CD14-positive monocyte (primary cell): ENCODE measurements at regions of chr15 and their contacts with region 1.

Region 1: GRCh38 chr15:38690689-38691332 is 126.2 kb upstream of the RASGRP1 start:
- DNase-seq: peak; percentile 25 to 56 (median 51)
- H3K4me3 ChIP-seq: no peak overlapping the region
- H3K4me3 Mint-ChIP-seq: no peak overlapping the region
- H3K27ac ChIP-seq: no peak overlapping the region
- H3K27ac Mint-ChIP-seq: no peak overlapping the region
- H3K4me1 ChIP-seq: no peaks in the 10 kb centered on the region
- H3K4me1 Mint-ChIP-seq: peaks cover 4% of the 10 kb centered on the region
- H3K27me3 ChIP-seq: no peaks in the 10 kb centered on the region
- H3K27me3 Mint-ChIP-seq: peaks cover 0 to 2% (median 0%) of the 10 kb centered on the region in 3 donors
- CTCF ChIP-seq: peak; percentile 87

Region 2: GRCh38 chr15:38440353-38441129 is 250.3 kb before region 1 on chr15:
- intact Hi-C with region 1: loop called in 1 of 2 experiments (anchors 5 kb)
- DNase-seq: peak; percentile 46 to 67 (median 52)
- H3K4me3 ChIP-seq: no peak overlapping the region
- H3K4me3 Mint-ChIP-seq: no peak overlapping the region
- H3K27ac ChIP-seq: no peak overlapping the region
- H3K27ac Mint-ChIP-seq: peak overlapping the region in 1 of 7 donors; percentile 58
- H3K4me1 ChIP-seq: peaks cover 18 to 24% of the 10 kb centered on the region in 2 donors
- H3K4me1 Mint-ChIP-seq: peaks cover 27% of the 10 kb centered on the region
- H3K27me3 ChIP-seq: no peaks in the 10 kb centered on the region
- H3K27me3 Mint-ChIP-seq: peaks cover 0 to 8% (median 4%) of the 10 kb centered on the region in 3 donors
- CTCF ChIP-seq: peak; percentile 97

Region 3: GRCh38 chr15:38474155-38474757 is 216.6 kb before region 1 on chr15:
- intact Hi-C with region 1: loop called (anchors 5 to 10 kb)
- DNase-seq: peak; percentile 11 to 38 (median 30)
- H3K4me3 ChIP-seq: no peak overlapping the region
- H3K4me3 Mint-ChIP-seq: no peak overlapping the region
- H3K27ac ChIP-seq: no peak overlapping the region
- H3K27ac Mint-ChIP-seq: no peak overlapping the region
- H3K4me1 ChIP-seq: no peaks in the 10 kb centered on the region
- H3K4me1 Mint-ChIP-seq: no peaks in the 10 kb centered on the region
- H3K27me3 ChIP-seq: no peaks in the 10 kb centered on the region
- H3K27me3 Mint-ChIP-seq: no peaks in the 10 kb centered on the region
- CTCF ChIP-seq: peak; percentile 77

Region 4: DNA sequence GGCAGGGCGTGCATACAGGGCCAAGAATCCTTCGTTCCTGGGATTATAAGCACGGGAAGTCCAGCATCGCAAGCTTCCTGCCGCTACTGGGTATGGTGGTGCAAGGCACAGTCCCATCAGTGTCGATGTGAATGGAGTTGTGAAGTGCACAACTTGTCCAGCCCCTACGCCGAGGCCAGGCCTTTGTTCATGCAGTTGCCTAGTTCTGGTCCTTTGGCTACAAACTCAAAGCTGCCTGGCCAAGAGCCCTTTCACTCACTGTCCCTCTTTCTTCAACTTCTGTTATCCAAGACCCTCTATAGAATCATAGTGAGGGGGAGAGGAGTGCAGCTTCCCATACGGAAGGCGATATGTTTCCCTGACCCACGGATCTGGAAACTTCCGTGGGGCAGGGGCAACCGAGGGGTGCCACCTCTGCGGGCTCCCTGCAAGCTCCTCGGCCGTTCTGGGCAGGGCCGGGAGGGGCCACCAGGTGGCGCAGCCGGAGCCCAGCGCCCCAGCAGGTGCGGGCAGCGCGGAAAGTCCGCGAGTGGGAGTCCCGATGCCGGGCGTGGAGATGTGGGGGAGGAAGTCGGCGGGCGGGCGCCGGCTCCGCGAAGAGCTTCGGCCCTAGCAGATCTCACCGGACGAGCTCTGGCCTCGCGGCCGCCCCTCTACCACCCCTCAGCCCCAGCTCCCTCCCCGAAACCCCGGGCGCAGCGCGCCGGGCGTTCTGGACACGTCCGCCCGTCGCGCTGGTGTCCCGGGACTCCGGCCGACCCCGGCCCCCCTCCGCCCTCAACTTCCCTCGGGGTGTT is 126.9 kb before region 1 on chr15:
- intact Hi-C with region 1: loop called (anchors 5 kb)
- DNase-seq: peak; percentile 15 to 62 (median 34)
- H3K4me3 ChIP-seq: peak overlapping the region in 2 of 3 experiments; percentile 14 to 72
- H3K4me3 Mint-ChIP-seq: peak overlapping the region; percentile 76 to 78
- H3K27ac ChIP-seq: no peak overlapping the region
- H3K27ac Mint-ChIP-seq: peak overlapping the region in 1 of 7 donors; percentile 26
- H3K4me1 ChIP-seq: peaks cover 3 to 14% of the 10 kb centered on the region in 2 donors
- H3K4me1 Mint-ChIP-seq: peaks cover 6% of the 10 kb centered on the region
- H3K27me3 ChIP-seq: peaks cover 18 to 21% of the 10 kb centered on the region in 2 donors
- H3K27me3 Mint-ChIP-seq: peaks cover 22 to 35% (median 23%) of the 10 kb centered on the region in 3 donors
- CTCF ChIP-seq: peak; percentile 95